CD4-positive, alpha-beta T cell (primary cell): ENCODE measurements at regions of chr2 and their contacts with region 1.

Region 1: DNA sequence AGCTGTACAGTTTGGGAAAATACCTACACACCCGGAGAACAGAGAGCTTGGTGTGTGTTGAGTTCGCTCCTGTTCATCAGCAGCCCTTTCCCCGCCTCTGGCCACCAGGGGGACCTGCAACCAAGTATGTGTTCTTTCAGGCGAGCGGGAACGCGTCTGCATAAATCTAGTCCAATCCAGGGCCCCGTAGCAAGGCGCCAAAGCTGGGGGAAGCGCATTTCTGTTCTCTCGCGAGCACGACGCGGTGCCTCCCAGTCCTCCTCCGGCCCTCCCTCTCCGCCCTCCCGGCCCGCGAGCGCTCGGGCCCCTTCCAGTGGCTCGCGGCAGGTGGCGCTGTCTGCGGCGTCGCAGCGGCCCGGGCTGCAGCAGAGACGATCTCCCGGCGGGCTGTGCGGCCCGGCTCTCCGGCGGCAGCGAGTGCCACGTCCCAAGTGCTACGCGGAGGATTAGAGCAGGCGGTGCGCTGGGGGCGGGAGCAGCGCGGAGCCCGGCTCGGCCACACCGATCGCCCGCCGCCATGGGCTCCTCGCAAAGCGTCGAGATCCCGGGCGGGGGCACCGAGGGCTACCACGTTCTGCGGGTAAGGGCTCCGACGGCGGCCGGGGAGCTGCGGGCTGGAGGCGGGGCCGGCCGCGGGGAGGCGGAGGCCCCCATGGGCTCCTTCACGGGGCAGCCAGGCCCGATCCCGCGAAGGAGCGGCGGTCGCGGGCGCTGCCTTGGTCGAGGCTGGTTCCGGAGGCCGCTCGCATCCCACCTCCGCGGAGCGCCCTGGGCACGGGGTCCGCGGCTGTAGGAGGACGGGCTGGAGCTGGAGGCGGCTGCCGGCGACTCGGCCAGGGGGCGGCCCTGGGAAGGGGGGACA is at the start of gene GORASP2:
- DNase-seq: peak; percentile 94 to 100 (median 97)
- ATAC-seq: peak; percentile 90
- H3K4me3 ChIP-seq: peak within 1 kb of the TSS; percentile 91
- H3K4me3 Mint-ChIP-seq: peak within 1 kb of the TSS; percentile 97
- H3K27ac ChIP-seq: peak within 1 kb of the TSS; percentile 80 to 86
- H3K27ac Mint-ChIP-seq: peak within 1 kb of the TSS; percentile 94
- H3K4me1 ChIP-seq: peaks cover 12% of the 10 kb centered on the region
- H3K4me1 Mint-ChIP-seq: peaks cover 49% of the 10 kb centered on the region
- H3K27me3 ChIP-seq: no peaks in the 10 kb centered on the region
- H3K27me3 Mint-ChIP-seq: no peaks in the 10 kb centered on the region
- CTCF ChIP-seq: peak; percentile 97
- total RNA-seq, gene GORASP2: 87.3 to 95.7 TPM

Region 2: DNA sequence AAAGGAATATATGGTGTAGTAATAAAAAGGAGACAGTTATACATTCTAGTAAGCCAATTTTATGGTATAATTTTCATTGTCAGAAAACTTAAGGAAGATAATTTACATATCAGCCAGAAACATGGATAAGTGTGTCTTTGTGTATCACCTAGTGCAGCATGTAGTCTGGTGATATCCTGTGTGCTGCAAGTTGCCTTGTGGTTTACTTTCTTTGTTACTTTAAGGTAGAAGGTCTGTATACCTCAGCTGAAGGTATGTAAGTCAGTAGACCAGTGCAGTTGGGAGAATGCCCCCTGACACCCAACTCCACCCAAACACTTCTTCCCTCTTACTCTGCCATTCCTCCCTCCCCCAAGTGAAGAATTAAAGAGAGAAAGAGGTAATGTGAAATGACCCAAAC is 11.0 kb after region 1 on chr2:
- CTCF ChIA-PET with region 1: interaction called, 30 read pairs
- POLR2A ChIA-PET with region 1: interaction called, 8 read pairs
- intact Hi-C with region 1: no loop called
- DNase-seq: peak in 1 of 14 experiments; percentile 5
- ATAC-seq: no peak
- H3K4me3 ChIP-seq: no peak overlapping the region
- H3K4me3 Mint-ChIP-seq: no peak overlapping the region
- H3K27ac ChIP-seq: no peak overlapping the region
- H3K27ac Mint-ChIP-seq: no peak overlapping the region
- H3K4me1 ChIP-seq: peaks cover 6% of the 10 kb centered on the region
- H3K4me1 Mint-ChIP-seq: peaks cover 84% of the 10 kb centered on the region
- H3K27me3 ChIP-seq: no peaks in the 10 kb centered on the region
- H3K27me3 Mint-ChIP-seq: no peaks in the 10 kb centered on the region
- CTCF ChIP-seq: no peak

Region 3: GRCh38 chr2:170973492-170974303 is 44.6 kb after region 1 on chr2:
- CTCF ChIA-PET with region 1: interaction called, 30 read pairs
- POLR2A ChIA-PET with region 1: interaction called, 15 read pairs
- intact Hi-C with region 1: loop called (anchors 1 to 5 kb)
- DNase-seq: peak; percentile 81 to 96 (median 84)
- ATAC-seq: peak; percentile 93
- H3K4me3 ChIP-seq: peak overlapping the region; percentile 86
- H3K4me3 Mint-ChIP-seq: peak overlapping the region; percentile 86
- H3K27ac ChIP-seq: peak overlapping the region in 1 of 2 donors; percentile 41
- H3K27ac Mint-ChIP-seq: peak overlapping the region; percentile 54
- H3K4me1 ChIP-seq: peaks cover 16% of the 10 kb centered on the region
- H3K4me1 Mint-ChIP-seq: peaks cover 12% of the 10 kb centered on the region
- H3K27me3 ChIP-seq: no peaks in the 10 kb centered on the region
- H3K27me3 Mint-ChIP-seq: no peaks in the 10 kb centered on the region
- CTCF ChIP-seq: peak; percentile 72

Region 4: DNA sequence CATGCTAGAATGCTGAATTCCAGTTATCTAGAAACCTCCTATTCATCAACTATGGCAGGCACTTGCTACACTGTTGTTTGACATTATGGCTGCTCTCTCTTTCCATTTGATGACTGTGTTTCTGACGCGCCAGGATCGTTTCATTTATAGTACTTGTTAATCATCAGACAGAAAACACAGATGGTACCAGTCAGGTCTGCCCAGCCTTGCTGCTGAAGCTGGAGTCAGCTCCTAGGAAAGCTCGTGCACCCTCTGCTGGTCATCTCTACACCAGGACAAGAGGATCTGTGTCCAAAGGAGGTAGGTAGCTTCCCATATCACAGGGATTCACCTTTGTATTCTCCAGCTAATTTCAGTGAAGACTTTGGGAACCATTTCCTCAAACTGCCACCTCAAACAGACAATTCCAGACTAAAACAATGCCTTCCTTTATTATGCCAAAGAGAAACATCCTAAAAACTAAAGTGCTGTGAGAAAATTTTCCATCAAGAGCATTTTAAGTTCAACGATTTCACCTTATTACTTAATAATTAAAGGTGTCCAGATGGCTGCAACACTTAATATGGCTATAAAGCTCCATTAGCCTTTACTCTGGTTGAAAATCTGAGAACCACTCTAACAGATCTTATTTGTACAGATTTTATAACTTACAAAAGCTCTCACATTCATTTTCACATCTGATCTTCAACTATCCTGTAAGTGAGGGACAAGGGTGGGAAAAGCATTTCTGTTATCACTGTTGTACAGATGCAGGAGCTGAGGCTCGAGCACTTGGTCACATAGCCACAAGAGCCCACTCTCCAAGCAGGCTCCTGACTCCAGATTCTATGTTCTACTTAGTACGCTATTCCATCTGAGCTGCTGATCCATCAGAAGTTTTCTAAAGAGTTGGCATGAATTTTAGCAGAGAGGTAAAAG is 487.2 kb after region 1 on chr2:
- CTCF ChIA-PET with region 1: interaction called, 12 read pairs
- POLR2A ChIA-PET with region 1: interaction called, 10 read pairs
- intact Hi-C with region 1: loop called (anchors 1 kb)
- DNase-seq: peak; percentile 62 to 90 (median 77)
- ATAC-seq: peak; percentile 99
- H3K4me3 ChIP-seq: no peak overlapping the region
- H3K4me3 Mint-ChIP-seq: no peak overlapping the region
- H3K27ac ChIP-seq: no peak overlapping the region
- H3K27ac Mint-ChIP-seq: peak overlapping the region; percentile 18
- H3K4me1 ChIP-seq: peaks cover 4% of the 10 kb centered on the region
- H3K4me1 Mint-ChIP-seq: peaks cover 6% of the 10 kb centered on the region
- H3K27me3 ChIP-seq: no peaks in the 10 kb centered on the region
- H3K27me3 Mint-ChIP-seq: no peaks in the 10 kb centered on the region
- CTCF ChIP-seq: peak; percentile 89

Region 5: GRCh38 chr2:171999604-172000469 is 1070.8 kb after region 1 on chr2 and contains the start of gene METAP1D:
- CTCF ChIA-PET with region 1: no interaction called
- POLR2A ChIA-PET with region 1: no interaction called
- intact Hi-C with region 1: loop called in 1 of 2 experiments (anchors 10 kb)
- DNase-seq: peak; percentile 61 to 93 (median 82)
- ATAC-seq: peak; percentile 90
- H3K4me3 ChIP-seq: peak within 1 kb of the TSS; percentile 75
- H3K4me3 Mint-ChIP-seq: peak within 1 kb of the TSS; percentile 88
- H3K27ac ChIP-seq: peak within 1 kb of the TSS; percentile 23 to 38
- H3K27ac Mint-ChIP-seq: peak within 1 kb of the TSS; percentile 74
- H3K4me1 ChIP-seq: peaks cover 12% of the 10 kb centered on the region
- H3K4me1 Mint-ChIP-seq: peaks cover 23% of the 10 kb centered on the region
- H3K27me3 ChIP-seq: no peaks in the 10 kb centered on the region
- H3K27me3 Mint-ChIP-seq: peaks cover 8% of the 10 kb centered on the region
- CTCF ChIP-seq: no peak
- total RNA-seq, gene METAP1D: 7.2 to 7.9 TPM